Naive thymus-derived CD4-positive, alpha-beta T cell (primary cell): ENCODE measurements at regions of chr6 and their contacts with region 1.

Region 1: DNA sequence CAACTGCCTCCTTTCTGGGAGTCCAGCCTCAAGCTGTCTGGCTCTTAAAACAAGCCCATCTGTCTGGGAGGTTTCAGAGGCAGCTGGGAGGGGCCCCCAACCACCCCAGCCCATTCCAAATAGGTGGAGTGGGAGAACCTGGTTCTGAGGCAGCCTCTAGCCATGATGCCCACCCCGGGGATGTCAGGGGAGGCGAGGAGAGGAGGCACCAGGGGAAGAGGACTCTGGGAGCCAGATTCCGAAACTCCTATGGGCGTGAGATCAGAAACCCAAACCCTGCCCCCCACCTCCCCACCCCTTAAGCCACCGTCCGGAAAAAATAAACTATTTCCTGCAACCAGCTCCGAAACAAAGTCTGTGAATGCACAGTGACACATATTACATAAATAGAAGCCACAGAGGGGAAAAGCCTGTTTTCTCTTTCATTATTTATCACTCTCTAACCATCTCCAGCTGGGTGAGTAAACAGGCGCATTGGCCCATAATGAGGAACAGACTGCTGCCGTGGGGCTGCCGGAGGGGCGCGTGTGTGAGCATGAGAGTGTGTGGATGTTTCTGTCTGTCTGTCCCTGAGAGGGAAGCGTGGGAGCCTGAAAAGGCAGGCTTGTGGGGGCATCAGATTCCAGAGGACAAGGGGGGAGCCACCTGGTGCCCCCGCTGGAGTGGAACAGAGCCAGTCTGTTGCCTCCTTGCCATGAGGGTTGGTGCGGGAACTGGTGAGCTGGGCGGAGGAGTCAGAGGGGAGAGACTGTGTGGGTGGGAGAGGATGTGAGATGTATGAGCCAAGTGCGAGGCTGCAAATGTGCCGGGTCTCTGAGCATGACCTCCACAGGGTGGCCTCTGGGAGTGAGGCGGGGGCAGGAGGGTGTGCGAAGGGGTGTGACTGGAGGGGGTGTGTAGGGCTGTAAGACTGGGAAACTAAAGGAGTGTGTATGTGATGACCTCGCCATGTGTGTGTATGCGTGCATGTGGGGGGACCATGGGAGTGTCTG is 14.3 kb upstream of the FOXP4 start:
- DNase-seq: peak in 8 of 9 donors; percentile 8 to 71 (median 36)
- ATAC-seq: peak; percentile 76
- H3K4me3 ChIP-seq: peak overlapping the region; percentile 56
- H3K4me3 Mint-ChIP-seq: peak overlapping the region; percentile 73 to 97 (median 84)
- H3K27ac ChIP-seq: no peak overlapping the region
- H3K27ac Mint-ChIP-seq: peak overlapping the region; percentile 25 to 95 (median 72)
- H3K4me1 ChIP-seq: peaks cover 16 to 23% of the 10 kb centered on the region in 2 donors
- H3K4me1 Mint-ChIP-seq: peaks cover 22 to 35% (median 31%) of the 10 kb centered on the region in 7 donors
- H3K27me3 ChIP-seq: no peaks in the 10 kb centered on the region
- H3K27me3 Mint-ChIP-seq: peaks cover 0 to 83% (median 9%) of the 10 kb centered on the region in 5 donors

Region 2: DNA sequence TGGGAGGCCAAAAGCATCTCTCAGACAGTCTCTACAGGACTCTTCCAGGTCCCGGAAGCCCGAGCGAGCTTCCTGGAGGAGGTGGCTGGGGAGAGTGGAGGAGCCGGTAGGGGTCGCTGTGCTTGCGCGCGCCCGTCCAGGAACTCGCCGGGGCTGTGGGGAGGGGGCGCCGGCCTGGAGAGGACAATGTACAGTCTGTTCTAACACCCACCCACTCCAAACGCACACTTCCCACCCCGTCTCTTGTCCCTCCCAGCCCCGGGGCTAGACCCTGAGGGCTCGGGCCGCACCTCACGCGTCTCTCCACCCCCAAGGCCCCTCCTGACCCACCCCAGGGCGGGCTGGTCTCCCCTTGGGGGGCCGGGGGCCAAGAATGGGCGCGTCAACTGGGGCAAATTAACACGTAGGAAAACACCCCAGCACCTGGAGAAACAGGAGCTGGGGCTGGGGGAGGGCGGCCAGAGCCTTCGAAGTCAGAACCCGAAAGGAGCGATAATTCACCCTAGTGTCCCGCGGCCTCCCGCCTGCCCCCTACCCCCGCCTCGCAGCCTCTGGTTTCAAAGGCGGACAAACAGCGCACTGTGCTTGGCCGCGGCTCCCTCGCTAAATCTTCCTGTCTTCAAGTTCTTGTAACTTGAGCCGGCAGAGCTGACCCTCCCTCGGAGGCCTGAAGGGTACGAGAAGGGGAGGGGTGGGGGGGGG is 88.9 kb before region 1 on chr6:
- CTCF ChIA-PET with region 1: no interaction called
- POLR2A ChIA-PET with region 1: no interaction called
- intact Hi-C with region 1: loop called in 1 of 2 experiments (anchors 5 kb)
- DNase-seq: no peak
- ATAC-seq: no peak
- H3K4me3 ChIP-seq: no peak overlapping the region
- H3K4me3 Mint-ChIP-seq: peak overlapping the region in 5 of 10 donors; percentile 17 to 75 (median 41)
- H3K27ac ChIP-seq: no peak overlapping the region
- H3K27ac Mint-ChIP-seq: no peak overlapping the region
- H3K4me1 ChIP-seq: peaks cover 36 to 37% of the 10 kb centered on the region in 2 donors
- H3K4me1 Mint-ChIP-seq: peaks cover 37 to 44% (median 40%) of the 10 kb centered on the region in 7 donors
- H3K27me3 ChIP-seq: no peaks in the 10 kb centered on the region
- H3K27me3 Mint-ChIP-seq: peaks cover 9 to 49% (median 19%) of the 10 kb centered on the region in 5 donors

Region 3: DNA sequence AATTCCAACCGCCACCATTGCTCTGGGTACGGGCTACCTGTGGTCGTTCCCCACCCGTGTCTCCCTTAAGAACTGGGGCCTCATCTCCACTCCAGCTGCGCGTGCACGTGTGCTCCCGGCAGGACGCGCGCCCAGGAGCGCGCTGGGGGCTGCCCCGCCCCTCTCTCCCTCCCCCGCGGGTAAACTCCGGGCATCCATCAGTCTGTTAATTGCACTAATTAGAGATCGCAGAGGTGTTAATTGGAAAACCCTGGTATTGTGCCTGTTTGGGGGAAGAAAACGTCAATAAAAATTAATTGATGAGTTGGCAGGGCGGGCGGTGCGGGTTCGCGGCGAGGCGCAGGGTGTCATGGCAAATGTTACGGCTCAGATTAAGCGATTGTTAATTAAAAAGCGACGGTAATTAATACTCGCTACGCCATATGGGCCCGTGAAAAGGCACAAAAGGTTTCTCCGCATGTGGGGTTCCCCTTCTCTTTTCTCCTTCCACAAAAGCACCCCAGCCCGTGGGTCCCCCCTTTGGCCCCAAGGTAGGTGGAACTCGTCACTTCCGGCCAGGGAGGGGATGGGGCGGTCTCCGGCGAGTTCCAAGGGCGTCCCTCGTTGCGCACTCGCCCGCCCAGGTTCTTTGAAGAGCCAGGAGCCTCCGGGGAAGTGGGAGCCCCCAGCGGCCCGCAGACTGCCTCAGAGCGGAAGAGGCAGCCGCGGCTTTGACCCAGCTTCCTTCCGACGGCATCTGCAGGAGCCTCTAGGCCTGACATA is 28.7 kb after region 1 on chr6:
- CTCF ChIA-PET with region 1: no interaction called
- POLR2A ChIA-PET with region 1: no interaction called
- intact Hi-C with region 1: loop called (anchors 1 kb)
- DNase-seq: peak; percentile 73 to 94 (median 85)
- ATAC-seq: peak; percentile 97
- H3K4me3 ChIP-seq: peak overlapping the region; percentile 80
- H3K4me3 Mint-ChIP-seq: peak overlapping the region; percentile 82 to 90 (median 86)
- H3K27ac ChIP-seq: peak overlapping the region; percentile 72
- H3K27ac Mint-ChIP-seq: peak overlapping the region in 8 of 9 donors; percentile 46 to 91 (median 82)
- H3K4me1 ChIP-seq: peaks cover 19 to 24% of the 10 kb centered on the region in 2 donors
- H3K4me1 Mint-ChIP-seq: peaks cover 8 to 33% (median 22%) of the 10 kb centered on the region in 7 donors
- H3K27me3 ChIP-seq: no peaks in the 10 kb centered on the region
- H3K27me3 Mint-ChIP-seq: peaks cover 0 to 58% (median 0%) of the 10 kb centered on the region in 5 donors